ENCODE measurements at regions of chr21 and their contacts with region 1.

Region 1: GRCh38 chr21:38733973-38734546 is 71.7 kb upstream of the ETS2 start:
- DNase-seq: peak; percentile 20 to 80 (median 49)
- ATAC-seq: peak; percentile 80
- H3K4me3 ChIP-seq: peak overlapping the region; percentile 53
- H3K4me3 Mint-ChIP-seq: peak overlapping the region; percentile 78 to 89 (median 84)
- H3K27ac ChIP-seq: no peak overlapping the region
- H3K27ac Mint-ChIP-seq: no peak overlapping the region
- H3K4me1 ChIP-seq: peaks cover 5 to 7% of the 10 kb centered on the region in 2 donors
- H3K4me1 Mint-ChIP-seq: peaks cover 4 to 12% (median 8%) of the 10 kb centered on the region in 7 donors
- H3K27me3 ChIP-seq: peaks cover 0 to 5% of the 10 kb centered on the region in 2 donors
- H3K27me3 Mint-ChIP-seq: peaks cover 24 to 51% (median 30%) of the 10 kb centered on the region in 5 donors

Region 2: GRCh38 chr21:38505654-38506515 is 228.2 kb before region 1 on chr21:
- CTCF ChIA-PET with region 1: no interaction called
- POLR2A ChIA-PET with region 1: no interaction called
- intact Hi-C with region 1: loop called in 1 of 2 experiments (anchors 5 kb)
- DNase-seq: peak in 5 of 9 donors; percentile 11 to 34 (median 13)
- ATAC-seq: peak; percentile 65
- H3K4me3 ChIP-seq: no peak overlapping the region
- H3K4me3 Mint-ChIP-seq: no peak overlapping the region
- H3K27ac ChIP-seq: no peak overlapping the region
- H3K27ac Mint-ChIP-seq: no peak overlapping the region
- H3K4me1 ChIP-seq: no peaks in the 10 kb centered on the region
- H3K4me1 Mint-ChIP-seq: peaks cover 9 to 21% (median 11%) of the 10 kb centered on the region in 7 donors
- H3K27me3 ChIP-seq: no peaks in the 10 kb centered on the region
- H3K27me3 Mint-ChIP-seq: peaks cover 21 to 52% (median 50%) of the 10 kb centered on the region in 5 donors

Region 3: GRCh38 chr21:38628349-38628748 is 105.7 kb before region 1 on chr21:
- CTCF ChIA-PET with region 1: no interaction called
- POLR2A ChIA-PET with region 1: no interaction called
- intact Hi-C with region 1: no loop called
- DNase-seq: no peak
- ATAC-seq: no peak
- H3K4me3 ChIP-seq: no peak overlapping the region
- H3K4me3 Mint-ChIP-seq: no peak overlapping the region
- H3K27ac ChIP-seq: no peak overlapping the region
- H3K27ac Mint-ChIP-seq: no peak overlapping the region
- H3K4me1 ChIP-seq: no peaks in the 10 kb centered on the region
- H3K4me1 Mint-ChIP-seq: no peaks in the 10 kb centered on the region
- H3K27me3 ChIP-seq: no peaks in the 10 kb centered on the region
- H3K27me3 Mint-ChIP-seq: peaks cover 0 to 41% (median 22%) of the 10 kb centered on the region in 5 donors

Region 4: DNA sequence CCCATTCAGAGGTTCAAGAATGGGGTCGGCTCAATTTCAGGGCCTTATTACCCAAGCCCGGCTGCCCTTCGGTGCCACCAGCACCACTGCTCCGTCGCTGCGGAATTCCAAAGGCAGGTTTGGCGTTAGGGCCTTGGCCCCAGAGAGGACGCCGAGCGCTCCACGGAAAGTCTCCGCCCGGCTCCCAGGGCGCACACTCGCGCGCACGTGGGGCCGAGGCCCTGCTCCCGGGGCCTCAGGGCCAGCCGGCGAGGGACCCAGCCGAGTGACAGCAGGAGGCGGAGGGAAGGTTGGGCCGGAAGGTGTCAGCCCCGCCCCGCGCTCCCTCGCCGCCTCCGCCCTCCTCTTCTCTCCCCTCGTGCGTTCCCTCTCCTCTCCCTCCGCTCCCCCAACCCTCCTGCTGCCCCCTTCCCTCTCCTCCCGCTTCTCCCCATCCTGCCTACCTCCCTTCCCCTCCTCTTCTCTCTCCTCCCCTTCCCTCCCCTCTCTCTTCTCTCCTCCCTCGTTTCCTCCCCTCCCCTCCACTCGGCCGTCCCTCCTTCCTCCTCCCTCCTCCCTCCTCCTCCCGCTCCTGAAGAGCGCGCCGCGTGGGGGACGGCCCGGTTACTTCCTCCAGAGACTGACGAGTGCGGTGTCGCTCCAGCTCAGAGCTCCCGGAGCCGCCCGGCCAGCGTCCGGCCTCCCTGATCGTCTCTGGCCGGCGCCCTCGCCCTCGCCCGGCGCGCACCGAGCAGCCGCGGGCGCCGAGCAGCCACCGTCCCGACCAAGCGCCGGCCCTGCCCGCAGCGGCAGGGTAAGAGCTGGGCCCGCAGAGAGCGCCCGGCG is 71.5 kb after region 1 on chr21 and contains the start of gene ETS2:
- CTCF ChIA-PET with region 1: interaction called, 3 read pairs
- POLR2A ChIA-PET with region 1: no interaction called
- intact Hi-C with region 1: loop called (anchors 1 kb)
- DNase-seq: peak; percentile 40 to 79 (median 62)
- ATAC-seq: peak; percentile 85
- H3K4me3 ChIP-seq: peak within 1 kb of the TSS; percentile 81
- H3K4me3 Mint-ChIP-seq: peak within 1 kb of the TSS; percentile 85 to 97 (median 92)
- H3K27ac ChIP-seq: peak within 1 kb of the TSS; percentile 70
- H3K27ac Mint-ChIP-seq: peak within 1 kb of the TSS; percentile 76 to 95 (median 86)
- H3K4me1 ChIP-seq: peaks cover 3 to 9% of the 10 kb centered on the region in 2 donors
- H3K4me1 Mint-ChIP-seq: peaks cover 12 to 39% (median 30%) of the 10 kb centered on the region in 7 donors
- H3K27me3 ChIP-seq: no peaks in the 10 kb centered on the region
- H3K27me3 Mint-ChIP-seq: peaks cover 0 to 4% (median 0%) of the 10 kb centered on the region in 5 donors
- total RNA-seq, gene ETS2: 15.6 to 61.1 (median 20.9) TPM

Region 5: DNA sequence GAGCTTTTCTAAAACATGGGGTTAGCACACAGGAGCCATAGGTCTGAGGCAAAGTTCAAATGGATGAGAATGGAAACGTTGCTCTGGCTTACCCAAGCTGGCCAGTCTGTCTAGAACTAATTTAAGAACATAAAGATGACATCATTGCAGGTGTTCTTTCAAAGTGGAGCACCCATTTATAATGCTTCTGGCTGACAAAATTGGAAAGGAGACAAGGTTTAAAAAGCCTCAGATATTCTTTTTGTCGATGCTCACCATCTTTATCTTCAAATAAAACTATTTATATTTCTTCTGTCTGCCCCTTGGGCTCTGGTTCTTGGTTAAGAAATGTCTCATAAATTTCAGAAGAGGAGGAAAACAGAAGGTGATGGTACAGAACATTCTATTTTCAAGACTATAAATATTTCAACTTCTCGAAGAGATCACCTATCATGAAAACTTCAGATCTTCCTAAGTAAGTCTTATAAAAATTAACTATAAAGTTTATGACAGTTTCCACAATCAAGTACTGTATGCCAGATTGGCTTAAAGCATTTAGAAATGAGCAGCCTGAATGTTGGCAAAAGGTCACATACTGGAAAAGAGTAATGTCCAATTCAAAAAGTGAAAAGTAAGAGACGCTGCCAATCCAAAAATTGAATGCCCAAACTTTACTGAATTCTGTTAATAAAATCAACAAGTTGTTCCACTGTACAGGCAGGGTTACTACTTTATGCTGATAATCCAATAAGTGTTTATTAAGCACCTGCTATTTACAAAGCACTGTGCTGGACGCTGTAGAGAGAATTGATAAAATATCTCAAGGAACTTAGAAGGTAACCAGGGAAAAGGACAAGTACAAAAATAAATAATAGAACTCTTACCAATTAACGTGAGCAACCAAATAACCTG is 163.7 kb after region 1 on chr21:
- CTCF ChIA-PET with region 1: no interaction called
- POLR2A ChIA-PET with region 1: no interaction called
- intact Hi-C with region 1: loop called in 1 of 2 experiments (anchors 10 kb)
- DNase-seq: no peak
- ATAC-seq: no peak
- H3K4me3 ChIP-seq: no peak overlapping the region
- H3K4me3 Mint-ChIP-seq: no peak overlapping the region
- H3K27ac ChIP-seq: no peak overlapping the region
- H3K27ac Mint-ChIP-seq: no peak overlapping the region
- H3K4me1 ChIP-seq: no peaks in the 10 kb centered on the region
- H3K4me1 Mint-ChIP-seq: no peaks in the 10 kb centered on the region
- H3K27me3 ChIP-seq: no peaks in the 10 kb centered on the region
- H3K27me3 Mint-ChIP-seq: peaks cover 10 to 23% (median 14%) of the 10 kb centered on the region in 5 donors

Region 6: DNA sequence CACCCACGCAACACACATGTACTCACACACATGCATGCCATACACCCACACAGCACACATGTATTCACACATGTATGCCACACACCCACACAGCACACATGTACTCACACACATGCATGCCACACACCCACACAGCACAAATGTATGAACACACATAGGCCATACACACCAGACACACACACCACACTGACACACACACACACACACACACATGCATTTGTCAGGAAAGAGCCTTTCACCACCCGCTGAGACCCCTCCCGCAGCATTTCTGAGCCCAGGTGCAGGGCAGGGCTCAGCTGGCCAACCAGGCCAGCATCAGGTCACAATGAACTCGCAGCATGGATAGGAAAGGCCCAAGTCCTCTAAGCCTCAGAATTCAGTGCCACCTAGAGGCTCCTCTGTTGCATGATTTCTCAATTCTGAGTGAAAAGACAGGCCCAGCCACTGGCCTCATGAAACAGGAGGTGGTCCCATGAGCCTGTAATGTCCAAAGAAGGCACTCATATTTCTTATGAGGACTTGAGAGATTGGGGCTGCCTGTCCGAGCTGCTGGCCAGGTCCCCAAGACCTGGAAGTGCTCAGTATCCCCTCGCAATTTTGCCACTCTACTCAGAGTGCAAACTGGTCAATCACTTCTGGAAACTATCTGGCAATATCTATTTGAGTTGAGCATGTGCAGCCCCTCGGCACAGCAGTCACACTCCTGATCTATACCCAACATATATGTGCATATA is 391.9 kb after region 1 on chr21:
- CTCF ChIA-PET with region 1: no interaction called
- POLR2A ChIA-PET with region 1: no interaction called
- intact Hi-C with region 1: loop called (anchors 1 kb)
- DNase-seq: no peak
- ATAC-seq: peak; percentile 63
- H3K4me3 ChIP-seq: no peak overlapping the region
- H3K4me3 Mint-ChIP-seq: no peak overlapping the region
- H3K27ac ChIP-seq: no peak overlapping the region
- H3K27ac Mint-ChIP-seq: no peak overlapping the region
- H3K4me1 ChIP-seq: no peaks in the 10 kb centered on the region
- H3K4me1 Mint-ChIP-seq: peaks cover 0 to 10% (median 0%) of the 10 kb centered on the region in 7 donors
- H3K27me3 ChIP-seq: no peaks in the 10 kb centered on the region
- H3K27me3 Mint-ChIP-seq: peaks cover 0 to 21% (median 4%) of the 10 kb centered on the region in 5 donors

Region 7: GRCh38 chr21:39175154-39175553 is 441.1 kb after region 1 on chr21:
- CTCF ChIA-PET with region 1: interaction called, 3 read pairs
- POLR2A ChIA-PET with region 1: no interaction called
- intact Hi-C with region 1: loop called (anchors 1 kb)
- DNase-seq: peak in 5 of 9 donors; percentile 9 to 29 (median 13)
- ATAC-seq: no peak
- H3K4me3 ChIP-seq: no peak overlapping the region
- H3K4me3 Mint-ChIP-seq: no peak overlapping the region
- H3K27ac ChIP-seq: no peak overlapping the region
- H3K27ac Mint-ChIP-seq: no peak overlapping the region
- H3K4me1 ChIP-seq: no peaks in the 10 kb centered on the region
- H3K4me1 Mint-ChIP-seq: peaks cover 0 to 18% (median 11%) of the 10 kb centered on the region in 7 donors
- H3K27me3 ChIP-seq: no peaks in the 10 kb centered on the region
- H3K27me3 Mint-ChIP-seq: no peaks in the 10 kb centered on the region

Region 8: GRCh38 chr21:39388038-39388810 is 654.2 kb after region 1 on chr21:
- CTCF ChIA-PET with region 1: no interaction called
- POLR2A ChIA-PET with region 1: no interaction called
- intact Hi-C with region 1: loop called in 1 of 2 experiments (anchors 1 kb)
- DNase-seq: peak; percentile 71 to 93 (median 83)
- ATAC-seq: peak; percentile 87
- H3K4me3 ChIP-seq: peak overlapping the region; percentile 51
- H3K4me3 Mint-ChIP-seq: peak overlapping the region; percentile 83 to 91 (median 90)
- H3K27ac ChIP-seq: peak overlapping the region; percentile 67
- H3K27ac Mint-ChIP-seq: peak overlapping the region; percentile 71 to 94 (median 90)
- H3K4me1 ChIP-seq: peaks cover 11 to 15% of the 10 kb centered on the region in 2 donors
- H3K4me1 Mint-ChIP-seq: peaks cover 18 to 38% (median 31%) of the 10 kb centered on the region in 7 donors
- H3K27me3 ChIP-seq: no peaks in the 10 kb centered on the region
- H3K27me3 Mint-ChIP-seq: no peaks in the 10 kb centered on the region

Measured in naive thymus-derived CD4-positive, alpha-beta T cell (primary cell).